Endothelial cell of umbilical vein (primary cell): ENCODE measurements at regions of chr1 and their contacts with region 1.

Region 1: GRCh38 chr1:93909146-93910050 is at the start of gene GCLM:
- DNase-seq: peak; percentile 97
- H3K4me3 ChIP-seq: peak within 1 kb of the TSS; percentile 70 to 90 (median 82)
- H3K27ac ChIP-seq: peak within 1 kb of the TSS; percentile 69
- H3K4me1 ChIP-seq: peaks cover 39% of the 10 kb centered on the region
- H3K27me3 ChIP-seq: no peaks in the 10 kb centered on the region
- CTCF ChIP-seq: peak; percentile 86 to 99
- POLR2A ChIP-seq: peak; percentile 63
- total RNA-seq, gene GCLM: 45.6 and 55.9 TPM in 2 replicates

Region 2: DNA sequence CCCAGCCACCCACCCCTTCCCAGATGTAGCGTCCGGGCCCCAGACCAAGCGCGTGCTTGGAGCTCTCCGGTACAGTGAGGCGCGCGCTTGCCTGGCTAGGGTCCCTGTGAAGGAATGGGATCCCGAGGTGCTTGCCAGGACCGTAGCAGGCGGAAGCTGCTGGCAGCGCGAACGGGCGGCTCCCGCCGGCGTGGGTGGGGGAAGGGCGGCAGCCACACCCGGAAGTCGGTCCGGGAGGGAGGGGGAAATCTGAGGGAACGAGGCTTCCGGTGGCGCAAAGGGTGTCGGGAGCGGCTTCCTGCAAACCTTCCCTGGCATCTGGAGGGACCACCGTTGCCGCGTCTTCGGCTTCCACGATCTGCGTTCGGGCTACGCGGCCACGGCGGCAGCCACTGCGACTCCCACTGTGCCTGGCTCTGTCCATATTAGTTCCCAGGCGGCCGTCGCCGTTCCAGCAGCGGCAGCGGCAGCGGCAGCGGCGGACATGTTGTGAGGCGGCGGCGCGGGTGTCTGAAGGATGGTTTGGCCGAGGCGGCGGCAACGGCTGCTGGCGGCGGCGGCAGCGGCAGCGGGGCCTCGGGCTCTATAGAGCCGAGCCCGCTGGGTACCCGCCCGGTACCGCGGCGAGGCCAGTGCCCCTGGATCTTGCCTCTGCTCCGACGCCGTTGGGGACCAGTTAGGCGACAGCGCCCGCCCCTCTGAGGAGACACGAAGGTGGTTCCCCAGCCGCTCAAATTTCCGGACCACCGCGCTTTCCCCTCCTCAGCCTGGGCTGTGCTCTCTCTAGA is 563.6 kb before region 1 on chr1 and contains the start of gene DR1:
- CTCF ChIA-PET with region 1: no interaction called
- POLR2A ChIA-PET with region 1: no interaction called
- dilution Hi-C with region 1: no loop called
- intact Hi-C with region 1: loop called (anchors 1 kb)
- DNase-seq: peak; percentile 94
- H3K4me3 ChIP-seq: peak within 1 kb of the TSS; percentile 89 to 99 (median 97)
- H3K27ac ChIP-seq: peak within 1 kb of the TSS; percentile 88
- H3K4me1 ChIP-seq: peaks cover 22% of the 10 kb centered on the region
- H3K27me3 ChIP-seq: no peaks in the 10 kb centered on the region
- CTCF ChIP-seq: no peak
- POLR2A ChIP-seq: peak; percentile 93
- total RNA-seq, gene DR1: 49.4 and 52.2 TPM in 2 replicates

Region 3: GRCh38 chr1:93784538-93784937 is 124.9 kb before region 1 on chr1:
- CTCF ChIA-PET with region 1: no interaction called
- POLR2A ChIA-PET with region 1: no interaction called
- dilution Hi-C with region 1: no loop called
- intact Hi-C with region 1: no loop called
- DNase-seq: no peak
- H3K4me3 ChIP-seq: no peak overlapping the region
- H3K27ac ChIP-seq: no peak overlapping the region
- H3K4me1 ChIP-seq: peaks cover 10% of the 10 kb centered on the region
- H3K27me3 ChIP-seq: no peaks in the 10 kb centered on the region
- CTCF ChIP-seq: no peak
- POLR2A ChIP-seq: no peak

Region 4: GRCh38 chr1:93814059-93814794 is 95.2 kb before region 1 on chr1:
- CTCF ChIA-PET with region 1: no interaction called
- POLR2A ChIA-PET with region 1: no interaction called
- dilution Hi-C with region 1: no loop called
- intact Hi-C with region 1: no loop called
- DNase-seq: peak; percentile 89
- H3K4me3 ChIP-seq: no peak overlapping the region
- H3K27ac ChIP-seq: no peak overlapping the region
- H3K4me1 ChIP-seq: peaks cover 39% of the 10 kb centered on the region
- H3K27me3 ChIP-seq: no peaks in the 10 kb centered on the region
- CTCF ChIP-seq: peak; percentile 89 to 97
- POLR2A ChIP-seq: no peak

Region 5: DNA sequence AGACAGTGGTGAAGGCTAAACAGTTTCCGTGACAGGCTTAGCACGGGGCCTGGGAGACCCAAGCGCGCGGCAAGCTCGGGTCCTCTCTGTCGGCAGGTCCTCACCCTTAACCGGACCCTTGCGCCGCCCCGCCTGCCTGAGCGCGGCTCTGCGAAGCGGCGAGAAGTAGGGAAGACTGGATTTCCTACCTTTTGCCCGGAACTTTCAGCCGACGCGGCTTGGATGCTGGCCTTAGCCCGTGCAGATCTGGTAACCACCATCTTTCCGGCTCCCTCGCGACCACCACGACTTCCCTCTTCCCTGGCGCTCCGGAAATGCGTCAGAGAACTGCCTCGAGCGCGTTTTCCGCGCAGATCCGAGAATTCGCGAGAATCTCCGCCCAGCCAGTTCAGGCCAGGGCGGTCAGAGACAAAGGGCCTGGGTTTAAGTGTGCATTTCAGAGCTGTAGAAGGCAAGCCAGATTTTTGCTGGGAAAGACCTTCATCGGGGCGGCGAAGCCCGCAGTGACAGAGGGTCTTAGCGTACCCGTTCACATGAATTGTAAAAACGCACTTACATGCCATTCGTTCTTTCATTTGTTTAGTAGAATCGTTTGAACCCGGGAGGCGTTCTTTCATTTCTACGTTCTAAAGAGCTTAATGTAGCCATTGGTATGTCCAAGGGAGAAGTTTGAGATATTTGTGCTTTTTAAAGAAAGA is 30.4 kb before region 1 on chr1 and contains the start of gene DNTTIP2:
- CTCF ChIA-PET with region 1: interaction called, 5 read pairs
- POLR2A ChIA-PET with region 1: interaction called, 3 read pairs
- dilution Hi-C with region 1: no loop called
- intact Hi-C with region 1: loop called (anchors 2 kb)
- DNase-seq: peak; percentile 93
- H3K4me3 ChIP-seq: peak within 1 kb of the TSS; percentile 68 to 94 (median 71)
- H3K27ac ChIP-seq: peak within 1 kb of the TSS; percentile 79
- H3K4me1 ChIP-seq: peaks cover 30% of the 10 kb centered on the region
- H3K27me3 ChIP-seq: no peaks in the 10 kb centered on the region
- CTCF ChIP-seq: no peak
- POLR2A ChIP-seq: peak; percentile 90
- total RNA-seq, gene DNTTIP2: 53.7 and 55.5 TPM in 2 replicates

Region 6: GRCh38 chr1:93919780-93920179 is 10.4 kb after region 1 on chr1:
- CTCF ChIA-PET with region 1: interaction called, 10 read pairs
- POLR2A ChIA-PET with region 1: no interaction called
- dilution Hi-C with region 1: no loop called
- intact Hi-C with region 1: no loop called
- DNase-seq: no peak
- H3K4me3 ChIP-seq: no peak overlapping the region
- H3K27ac ChIP-seq: no peak overlapping the region
- H3K4me1 ChIP-seq: no peaks in the 10 kb centered on the region
- H3K27me3 ChIP-seq: peaks cover 0 to 2% of the 10 kb centered on the region in 2 experiments
- CTCF ChIP-seq: no peak
- POLR2A ChIP-seq: no peak

Region 7: DNA sequence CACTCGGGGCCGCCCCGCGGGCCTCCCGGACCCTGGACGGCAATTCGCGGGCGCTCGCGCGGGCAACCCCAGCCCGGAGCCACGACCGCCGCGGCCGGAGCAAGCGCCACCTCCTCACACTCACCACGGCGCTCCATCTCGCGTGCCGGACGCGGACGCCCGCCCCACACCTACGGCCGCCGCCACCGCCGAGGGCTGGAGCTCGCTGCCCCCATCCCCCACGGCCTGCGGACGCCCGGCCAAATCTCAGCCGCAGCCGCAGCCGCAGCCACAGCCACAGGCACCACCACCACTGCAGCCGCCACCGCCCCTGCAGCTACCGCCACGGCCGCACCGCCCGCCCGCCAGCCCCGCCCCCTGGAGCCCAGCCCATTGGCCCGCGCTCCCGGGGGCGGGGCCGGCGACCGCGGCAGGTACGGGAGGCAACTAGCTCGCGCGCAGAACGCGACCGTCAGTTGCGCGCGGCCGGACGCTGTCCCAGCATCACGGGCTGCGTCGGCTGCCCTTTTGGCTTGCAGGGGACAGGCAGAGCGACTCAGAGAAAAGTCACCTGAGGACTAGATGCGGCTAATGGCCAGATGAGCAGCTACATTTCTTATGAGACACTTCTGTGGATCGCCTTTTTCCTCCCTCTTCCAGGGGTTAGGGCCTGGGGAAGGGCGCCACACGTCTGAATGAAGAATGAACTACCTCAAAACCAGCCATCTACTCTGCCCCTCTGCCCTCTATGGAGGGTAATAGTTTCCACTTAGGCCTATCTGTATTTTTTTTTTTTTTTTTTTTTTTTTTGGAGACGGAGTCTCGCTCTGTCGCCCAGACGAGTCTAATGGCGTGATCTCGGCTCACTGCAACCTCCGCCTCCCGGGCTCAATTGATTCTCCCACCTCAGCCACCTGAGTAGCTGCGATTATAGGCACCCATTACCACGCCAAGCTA is 328.2 kb after region 1 on chr1 and contains the start of gene ARHGAP29:
- CTCF ChIA-PET with region 1: interaction called, 3 read pairs
- POLR2A ChIA-PET with region 1: no interaction called
- dilution Hi-C with region 1: no loop called
- intact Hi-C with region 1: loop called (anchors 10 kb)
- DNase-seq: peak; percentile 86
- H3K4me3 ChIP-seq: peak within 1 kb of the TSS; percentile 88 to 100 (median 95)
- H3K27ac ChIP-seq: peak within 1 kb of the TSS; percentile 93
- H3K4me1 ChIP-seq: peaks cover 67% of the 10 kb centered on the region
- H3K27me3 ChIP-seq: no peaks in the 10 kb centered on the region
- CTCF ChIP-seq: no peak
- POLR2A ChIP-seq: peak; percentile 83
- total RNA-seq, gene ARHGAP29: 199 and 215 TPM in 2 replicates

Region 8: DNA sequence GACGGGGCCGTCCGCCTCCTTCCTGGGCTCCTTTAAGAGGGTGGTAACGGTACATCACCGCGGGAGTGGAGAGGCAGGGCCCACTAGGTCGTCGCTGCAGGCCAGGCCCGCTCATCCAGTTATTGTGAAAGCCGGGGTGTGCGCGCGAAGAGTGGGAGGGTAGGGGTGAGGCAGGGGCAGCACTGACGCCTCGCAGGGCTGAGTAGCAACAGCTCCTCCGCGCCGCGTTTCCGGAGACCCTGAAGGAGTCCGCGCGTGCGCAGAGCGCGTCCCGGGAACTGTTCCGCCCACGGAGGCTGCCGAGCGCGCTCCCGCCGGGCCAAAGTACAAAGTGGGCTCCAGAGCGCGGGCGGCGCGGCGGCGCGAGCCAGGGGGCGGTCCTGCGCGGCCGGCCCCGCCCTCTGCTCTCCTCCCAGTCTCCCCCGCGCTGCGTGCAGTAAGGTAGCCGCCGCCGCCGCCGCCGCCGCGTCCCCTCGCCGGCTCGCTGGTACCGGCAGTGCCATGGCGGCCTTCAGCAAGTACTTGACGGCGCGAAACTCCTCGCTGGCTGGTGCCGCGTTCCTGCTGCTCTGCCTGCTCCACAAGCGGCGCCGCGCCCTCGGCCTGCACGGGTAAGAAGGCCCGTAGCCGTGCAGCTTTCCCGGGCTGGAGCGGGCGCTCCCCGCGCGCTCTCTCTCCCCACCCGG is 508.7 kb after region 1 on chr1 and contains the start of gene ABCD3:
- CTCF ChIA-PET with region 1: interaction called, 4 read pairs
- POLR2A ChIA-PET with region 1: no interaction called
- dilution Hi-C with region 1: no loop called
- intact Hi-C with region 1: loop called (anchors 5 kb)
- DNase-seq: peak; percentile 98
- H3K4me3 ChIP-seq: peak within 1 kb of the TSS; percentile 80 to 94 (median 87)
- H3K27ac ChIP-seq: peak within 1 kb of the TSS; percentile 83
- H3K4me1 ChIP-seq: peaks cover 27% of the 10 kb centered on the region
- H3K27me3 ChIP-seq: peaks cover 4 to 5% of the 10 kb centered on the region in 2 experiments
- CTCF ChIP-seq: no peak
- POLR2A ChIP-seq: peak; percentile 66
- total RNA-seq, gene ABCD3: 31.6 and 32.6 TPM in 2 replicates